Caco-2 (cell line): ENCODE measurements at regions of chr10 and their contacts with region 1.

Region 1: GRCh38 chr10:69957886-69958555 is 94.6 kb upstream of the MACROH2A2 start:
- DNase-seq: peak; percentile 49 to 74
- H3K4me3 ChIP-seq: no peak overlapping the region
- H3K4me3 Mint-ChIP-seq: no peak overlapping the region
- H3K27ac Mint-ChIP-seq: no peak overlapping the region
- H3K4me1 ChIP-seq: no peaks in the 10 kb centered on the region
- H3K4me1 Mint-ChIP-seq: no peaks in the 10 kb centered on the region
- H3K27me3 ChIP-seq: peaks cover 3% of the 10 kb centered on the region
- H3K27me3 Mint-ChIP-seq: peaks cover 32% of the 10 kb centered on the region
- CTCF ChIP-seq: peak; percentile 93 to 97

Region 2: GRCh38 chr10:69786791-69787190 is 171.2 kb before region 1 on chr10:
- CTCF ChIA-PET with region 1: interaction called, 17 read pairs
- POLR2A ChIA-PET with region 1: no interaction called
- intact Hi-C with region 1: no loop called
- DNase-seq: no peak
- H3K4me3 ChIP-seq: no peak overlapping the region
- H3K4me3 Mint-ChIP-seq: no peak overlapping the region
- H3K27ac Mint-ChIP-seq: no peak overlapping the region
- H3K4me1 ChIP-seq: no peaks in the 10 kb centered on the region
- H3K4me1 Mint-ChIP-seq: no peaks in the 10 kb centered on the region
- H3K27me3 ChIP-seq: peaks cover 1% of the 10 kb centered on the region; the same call in 1 of the 2 replicates
- H3K27me3 Mint-ChIP-seq: peaks cover 8% of the 10 kb centered on the region
- CTCF ChIP-seq: no peak